ENCODE measurements at regions of chr11 and their contacts with region 1.

Region 1: GRCh38 chr11:120303004-120303637 is 22.0 kb upstream of the TLCD5 start:
- DNase-seq: peak in 40 of 42 donors; percentile 14 to 89 (median 61)

Region 2: DNA sequence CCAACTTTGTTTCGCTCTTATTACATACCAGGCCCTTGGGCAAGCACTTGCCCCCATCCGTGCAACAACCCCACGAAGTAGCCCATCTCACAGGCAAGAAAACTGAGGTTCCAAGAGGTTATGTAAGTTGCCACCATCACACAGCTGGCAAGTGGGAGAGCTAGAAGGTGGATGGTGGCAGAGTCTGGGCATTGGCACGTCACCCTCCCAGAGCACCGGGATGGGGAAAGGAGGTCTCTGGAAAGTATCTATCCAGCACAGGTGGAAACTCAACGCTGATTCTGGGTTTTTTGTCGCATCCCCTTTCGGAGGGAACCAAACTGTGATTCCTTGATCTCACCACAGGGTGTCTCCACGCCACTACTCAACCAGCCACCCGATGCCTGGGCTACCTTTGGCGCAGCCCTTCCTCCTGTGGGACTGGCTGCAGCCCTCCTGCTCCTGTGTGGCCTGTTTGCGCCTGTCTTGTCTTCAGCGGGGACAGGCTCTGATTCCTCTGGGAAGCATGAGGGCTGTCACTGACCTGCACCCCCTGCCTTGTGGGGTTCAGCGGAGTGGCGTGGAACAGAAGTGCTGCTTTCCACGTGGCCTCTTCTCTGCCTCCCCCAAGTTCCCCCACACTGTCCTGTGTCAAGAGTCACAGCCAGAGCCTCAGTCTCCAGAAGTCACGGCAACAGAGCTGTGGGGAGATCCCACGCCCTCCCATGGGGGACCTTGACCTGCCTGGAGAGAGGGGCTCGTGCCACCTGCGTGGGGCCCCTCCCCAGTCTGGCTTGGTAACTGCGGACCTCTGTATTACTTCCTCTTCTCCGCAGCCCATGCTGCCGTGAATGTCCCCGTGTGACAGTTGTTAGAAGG is 130.8 kb before region 1 on chr11:
- intact Hi-C with region 1: loop called (anchors 2 kb)
- DNase-seq: peak; percentile 61 to 91 (median 78)

Region 3: DNA sequence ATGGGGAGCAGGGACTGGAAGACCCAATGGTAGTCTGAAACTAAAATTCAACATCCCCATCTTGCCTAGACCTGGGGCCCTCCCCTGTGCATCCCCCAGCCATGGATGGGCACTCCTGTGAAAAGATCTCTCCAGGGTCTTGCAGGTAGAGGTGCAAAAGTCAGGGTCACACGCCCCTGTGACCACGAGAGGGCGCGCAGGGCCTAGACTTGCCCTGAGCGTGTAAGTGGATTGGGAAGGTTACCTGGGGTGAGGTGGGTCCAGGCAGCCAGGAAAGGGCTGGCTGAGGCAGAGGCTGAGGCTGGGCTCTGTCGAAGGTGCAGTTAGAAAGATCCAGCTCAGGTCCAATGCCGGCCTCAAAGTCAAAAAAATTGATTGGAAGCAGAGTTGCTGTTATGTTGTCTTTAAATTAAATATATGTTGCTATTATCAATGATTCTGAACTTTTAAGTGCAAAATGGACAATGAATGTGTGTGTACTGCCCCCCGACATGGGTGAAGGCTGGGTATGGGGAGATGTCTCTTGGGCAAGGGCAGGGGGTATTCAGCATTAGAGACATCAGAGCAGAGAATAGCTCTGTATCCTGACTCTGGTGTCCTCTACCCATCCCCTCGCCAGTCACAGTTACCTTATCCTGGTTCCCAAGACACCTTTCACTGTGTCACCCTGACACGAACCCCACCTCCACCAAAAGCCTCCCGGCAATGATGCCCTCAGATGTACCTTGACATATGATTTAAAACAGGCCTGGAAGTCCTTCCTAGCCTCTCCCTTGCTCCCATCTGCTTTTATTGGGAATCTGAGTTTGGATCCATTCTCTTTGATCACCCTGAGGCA is 67.9 kb before region 1 on chr11:
- intact Hi-C with region 1: loop called (anchors 5 kb)
- DNase-seq: peak in 36 of 42 donors; percentile 42 to 77 (median 60)

Measured in head of caudate nucleus (tissue), 42 donors.